ENCODE measurements at regions of chr19 and their contacts with region 1.

Region 1: DNA sequence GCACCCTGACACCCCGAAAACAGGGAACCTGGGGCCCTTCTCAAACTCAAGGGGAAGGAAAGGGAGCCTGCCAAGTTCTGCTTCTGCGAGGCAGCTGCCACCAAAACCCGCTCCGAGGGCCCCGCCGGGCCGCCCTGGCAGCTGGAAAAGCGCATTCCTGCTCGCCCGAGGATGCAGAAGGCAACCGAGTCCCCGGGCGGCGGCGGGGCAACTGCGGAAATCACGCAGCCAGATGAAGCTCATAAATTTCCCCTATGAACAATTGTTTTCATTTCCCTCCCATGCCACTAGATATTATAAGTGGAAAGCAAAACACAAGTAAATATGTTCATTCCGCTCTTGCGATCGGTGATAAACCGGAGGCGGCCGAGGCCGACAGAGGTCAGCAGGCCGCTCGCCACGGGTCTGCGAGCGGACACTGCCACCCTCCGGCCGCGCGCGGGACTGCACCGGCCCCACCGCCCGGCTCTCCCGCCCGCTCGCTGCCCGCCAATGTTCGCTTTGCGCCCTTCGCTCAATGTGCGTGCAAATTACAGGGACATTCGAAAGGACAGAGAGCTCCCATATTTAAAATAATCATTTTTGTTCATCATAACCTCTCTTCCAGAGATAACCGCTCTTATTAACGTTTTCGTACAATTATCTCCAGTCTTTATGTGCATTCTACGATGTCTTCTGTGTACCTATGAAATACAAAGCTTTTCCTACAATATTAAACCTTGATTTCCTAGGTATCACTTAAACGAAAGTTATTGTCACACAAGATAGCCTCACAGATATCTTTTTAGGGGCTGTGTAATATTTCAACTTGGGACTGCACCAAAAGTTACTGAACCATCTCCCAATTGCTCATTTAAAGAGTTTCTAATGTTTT is 120.8 kb upstream of the ZNF507 start:
- DNase-seq: peak in 1 of 2 experiments; percentile 91
- H3K4me3 ChIP-seq: peak overlapping the region; percentile 16 to 59 (median 36); a peak in 6 of 8 replicates
- H3K27ac ChIP-seq: no peak overlapping the region
- H3K4me1 ChIP-seq: peaks cover 0 to 5% (median 3%) of the 10 kb centered on the region in 4 experiments; a peak in 4 of 7 replicates
- H3K27me3 ChIP-seq: peaks cover 1 to 17% (median 13%) of the 10 kb centered on the region in 4 experiments
- CTCF ChIP-seq: peak; percentile 86 to 98 (median 94)
- EP300 ChIP-seq: no peak
- POLR2A ChIP-seq: no peak
- RAD21 ChIP-seq: peak; percentile 95

Region 2: GRCh38 chr19:31356587-31357314 is 867.9 kb before region 1 on chr19:
- CTCF ChIA-PET with region 1: interaction called, 14 read pairs
- POLR2A ChIA-PET with region 1: no interaction called
- DNase-seq: peak in 1 of 2 experiments; percentile 87
- H3K4me3 ChIP-seq: peak overlapping the region; percentile 33 to 82 (median 48); a peak in 5 of 8 replicates
- H3K27ac ChIP-seq: no peak overlapping the region
- H3K4me1 ChIP-seq: peaks cover 11 to 30% (median 23%) of the 10 kb centered on the region in 4 experiments
- H3K27me3 ChIP-seq: peaks cover 35 to 61% (median 57%) of the 10 kb centered on the region in 4 experiments; a peak in 6 of 7 replicates
- CTCF ChIP-seq: peak; percentile 54 to 81 (median 80)
- EP300 ChIP-seq: 0 out of 3 replicates have a peak, but pooled peaks of 1 of the 2 experiments have one; percentile 20
- POLR2A ChIP-seq: no peak
- RAD21 ChIP-seq: peak; percentile 55 to 69

Region 3: GRCh38 chr19:31570718-31571117 is 653.9 kb before region 1 on chr19:
- CTCF ChIA-PET with region 1: interaction called, 13 read pairs
- POLR2A ChIA-PET with region 1: no interaction called
- DNase-seq: no peak
- H3K4me3 ChIP-seq: no peak overlapping the region
- H3K27ac ChIP-seq: no peak overlapping the region
- H3K4me1 ChIP-seq: peaks cover 0 to 8% (median 2%) of the 10 kb centered on the region in 4 experiments; a peak in 2 of 7 replicates
- H3K27me3 ChIP-seq: no peaks in the 10 kb centered on the region
- CTCF ChIP-seq: no peak
- EP300 ChIP-seq: no peak
- POLR2A ChIP-seq: no peak
- RAD21 ChIP-seq: no peak

Region 4: GRCh38 chr19:32067685-32068084 is 156.9 kb before region 1 on chr19:
- CTCF ChIA-PET with region 1: interaction called, 22 read pairs
- POLR2A ChIA-PET with region 1: no interaction called
- DNase-seq: peak; percentile 15 to 60
- H3K4me3 ChIP-seq: no peak overlapping the region
- H3K27ac ChIP-seq: no peak overlapping the region
- H3K4me1 ChIP-seq: no peaks in the 10 kb centered on the region
- H3K27me3 ChIP-seq: no peaks in the 10 kb centered on the region
- CTCF ChIP-seq: peak; percentile 21 to 52 (median 49)
- EP300 ChIP-seq: no peak
- POLR2A ChIP-seq: no peak
- RAD21 ChIP-seq: peak; percentile 39 to 54

Region 5: GRCh38 chr19:32253683-32254508 is 29.3 kb after region 1 on chr19:
- CTCF ChIA-PET with region 1: interaction called, 10 read pairs
- POLR2A ChIA-PET with region 1: no interaction called
- DNase-seq: peak in 1 of 2 experiments; percentile 35
- H3K4me3 ChIP-seq: no peak overlapping the region
- H3K27ac ChIP-seq: no peak overlapping the region
- H3K4me1 ChIP-seq: no peaks in the 10 kb centered on the region; a peak in 1 of 7 replicates
- H3K27me3 ChIP-seq: no peaks in the 10 kb centered on the region; a peak in 1 of 7 replicates
- CTCF ChIP-seq: no peak
- EP300 ChIP-seq: no peak
- POLR2A ChIP-seq: no peak
- RAD21 ChIP-seq: no peak